B cell (primary cell): ENCODE measurements at regions of chr3 and their contacts with region 1.

Region 1: DNA sequence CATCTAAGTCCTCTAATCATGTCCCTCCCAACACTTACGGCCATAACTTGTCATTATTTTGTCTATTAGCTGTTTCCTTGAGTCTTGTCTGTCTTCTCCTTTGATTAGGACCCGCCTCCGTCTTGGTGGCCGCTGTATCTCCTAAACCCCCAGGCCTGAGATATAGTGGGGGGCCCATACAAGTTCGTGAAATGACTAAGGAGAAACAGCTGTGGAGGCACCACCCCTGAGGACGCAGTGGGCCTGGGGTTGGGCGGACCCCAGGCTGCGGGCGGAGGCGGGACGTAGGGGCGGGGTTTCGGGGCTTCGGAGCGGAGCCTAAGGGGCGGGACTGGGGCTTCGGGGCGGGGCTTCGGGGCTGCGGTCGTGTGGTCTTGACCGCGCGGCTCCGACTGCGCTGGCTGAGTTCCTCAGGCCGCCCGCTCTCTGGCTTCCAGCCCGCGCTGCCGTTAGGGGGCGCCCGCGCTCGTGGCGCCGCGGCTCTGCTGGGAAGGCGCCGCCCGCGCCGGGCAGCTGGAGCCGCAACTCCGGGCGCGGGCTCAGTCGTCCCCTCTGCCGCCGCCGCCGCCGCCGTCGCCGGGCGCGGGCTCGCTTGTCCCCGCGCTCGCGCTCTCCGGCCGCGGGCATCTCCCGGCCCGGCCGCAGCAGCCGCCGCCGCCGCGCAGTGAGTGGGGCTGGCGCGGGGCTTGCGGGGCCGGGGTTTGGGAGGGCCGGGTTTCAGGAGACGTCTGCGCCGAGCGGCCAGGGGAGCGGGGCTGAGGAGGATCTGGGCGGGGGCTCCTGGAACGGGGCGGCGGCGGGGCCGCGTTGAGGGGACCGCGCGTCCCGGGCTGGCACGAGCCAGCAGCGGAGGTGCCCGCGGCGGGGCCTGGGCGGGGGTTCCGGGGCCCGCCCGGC is at the start of gene KCTD6:
- DNase-seq: peak; percentile 96
- ATAC-seq: peak; percentile 91
- H3K4me3 ChIP-seq: peak within 1 kb of the TSS; percentile 50 to 82 (median 75)
- H3K4me3 Mint-ChIP-seq: peak within 1 kb of the TSS; percentile 93
- H3K27ac ChIP-seq: peak within 1 kb of the TSS; percentile 42 to 50
- H3K27ac Mint-ChIP-seq: peak within 1 kb of the TSS; percentile 87
- H3K4me1 ChIP-seq: peaks cover 21 to 29% of the 10 kb centered on the region in 2 donors
- H3K4me1 Mint-ChIP-seq: peaks cover 46% of the 10 kb centered on the region
- H3K27me3 ChIP-seq: no peaks in the 10 kb centered on the region
- H3K27me3 Mint-ChIP-seq: peaks cover 5% of the 10 kb centered on the region
- CTCF ChIP-seq: peak; percentile 59
- total RNA-seq, gene KCTD6: 14.6 and 16.8 TPM in 2 replicates

Region 2: GRCh38 chr3:58237238-58237940 is 254.4 kb before region 1 on chr3 and contains the start of gene ABHD6:
- CTCF ChIA-PET with region 1: no interaction called
- POLR2A ChIA-PET with region 1: no interaction called
- intact Hi-C with region 1: loop called (anchors 5 kb)
- DNase-seq: peak; percentile 93
- ATAC-seq: peak; percentile 75
- H3K4me3 ChIP-seq: peak within 1 kb of the TSS; percentile 51 to 96 (median 93)
- H3K4me3 Mint-ChIP-seq: peak within 1 kb of the TSS; percentile 97
- H3K27ac ChIP-seq: peak within 1 kb of the TSS; percentile 63 to 86
- H3K27ac Mint-ChIP-seq: peak within 1 kb of the TSS; percentile 94
- H3K4me1 ChIP-seq: peaks cover 41 to 48% of the 10 kb centered on the region in 2 donors
- H3K4me1 Mint-ChIP-seq: peaks cover 70% of the 10 kb centered on the region
- H3K27me3 ChIP-seq: no peaks in the 10 kb centered on the region
- H3K27me3 Mint-ChIP-seq: no peaks in the 10 kb centered on the region
- CTCF ChIP-seq: peak; percentile 15
- total RNA-seq, gene ABHD6: 22.2 and 24.2 TPM in 2 replicates

Region 3: DNA sequence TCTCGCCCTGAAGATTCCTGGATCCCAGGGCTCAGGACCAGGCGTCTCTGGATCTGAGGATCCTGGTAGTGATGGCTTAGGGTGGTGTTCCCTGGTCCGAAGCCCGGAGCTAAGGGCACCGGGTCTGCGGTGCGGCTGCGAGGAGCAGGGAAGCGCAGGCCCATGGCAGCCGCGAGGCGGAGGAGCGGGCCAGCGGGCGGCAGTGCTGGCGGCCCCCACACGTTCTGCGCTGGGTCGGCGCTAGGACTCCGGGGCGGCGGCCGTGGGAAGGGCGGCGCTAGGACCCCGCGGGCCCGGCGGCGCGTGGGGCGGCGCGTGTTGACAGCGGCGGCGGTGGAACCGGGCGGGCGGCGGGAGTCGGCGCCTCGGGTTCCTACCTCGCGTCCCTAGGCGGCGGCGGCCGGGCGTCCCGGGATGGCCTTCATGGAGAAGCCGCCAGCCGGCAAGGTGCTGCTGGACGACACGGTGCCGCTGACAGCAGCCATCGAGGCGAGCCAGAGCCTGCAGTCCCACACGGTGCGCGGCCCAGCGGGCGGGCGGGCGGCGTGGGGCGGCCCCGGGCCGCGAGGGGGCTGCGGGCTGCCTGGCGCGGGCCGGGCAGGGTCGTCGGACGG is 159.1 kb before region 1 on chr3 and contains the start of gene PXK:
- CTCF ChIA-PET with region 1: interaction called, 46 read pairs
- POLR2A ChIA-PET with region 1: interaction called, 7 read pairs
- intact Hi-C with region 1: loop called (anchors 1 kb)
- DNase-seq: peak; percentile 86
- ATAC-seq: peak; percentile 76
- H3K4me3 ChIP-seq: peak within 1 kb of the TSS; percentile 72 to 90 (median 87)
- H3K4me3 Mint-ChIP-seq: peak within 1 kb of the TSS; percentile 100
- H3K27ac ChIP-seq: peak within 1 kb of the TSS; percentile 9 to 75
- H3K27ac Mint-ChIP-seq: peak within 1 kb of the TSS; percentile 100
- H3K4me1 ChIP-seq: peaks cover 34 to 41% of the 10 kb centered on the region in 2 donors
- H3K4me1 Mint-ChIP-seq: peaks cover 50% of the 10 kb centered on the region
- H3K27me3 ChIP-seq: no peaks in the 10 kb centered on the region
- H3K27me3 Mint-ChIP-seq: no peaks in the 10 kb centered on the region
- CTCF ChIP-seq: no peak
- total RNA-seq, gene PXK: 104 and 109 TPM in 2 replicates

Region 4: DNA sequence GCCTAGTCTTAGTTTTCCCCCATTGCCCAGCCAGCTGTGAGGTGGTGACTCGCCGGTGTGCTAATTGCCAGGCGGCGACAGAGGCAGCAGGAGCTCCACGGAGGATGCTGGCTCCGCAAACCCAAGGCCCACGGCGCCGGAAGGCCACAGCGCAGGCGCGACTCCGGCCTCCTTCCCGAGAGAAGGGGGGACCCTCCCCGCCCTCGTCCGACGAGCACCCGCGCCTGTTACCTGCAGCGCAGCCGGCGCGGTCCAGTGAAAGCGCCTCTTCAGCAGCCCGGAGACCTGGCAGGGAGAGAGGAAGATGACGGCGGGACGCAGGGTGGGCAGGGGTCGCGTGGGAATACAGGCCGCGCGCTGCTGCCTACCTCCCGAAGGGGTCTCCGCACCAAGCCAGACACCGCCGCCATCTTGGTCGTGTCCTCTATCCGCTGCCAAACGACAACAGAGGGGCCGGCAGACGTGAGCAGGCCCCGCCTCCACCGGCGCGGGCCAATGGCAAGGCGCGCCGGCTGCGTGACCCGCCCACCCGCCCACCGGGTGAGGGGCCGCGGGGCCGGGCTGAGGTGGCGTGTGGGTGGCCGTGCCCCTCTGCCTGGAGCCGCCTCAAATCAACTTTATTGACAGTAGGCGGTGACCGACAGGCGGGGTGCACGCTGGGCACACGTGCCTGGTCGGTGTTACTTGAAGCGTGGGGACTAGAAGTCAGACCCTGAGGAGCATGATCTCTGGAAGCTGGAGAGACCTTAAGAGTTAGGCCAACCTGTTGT is 58.2 kb before region 1 on chr3 and contains the start of gene PDHB:
- CTCF ChIA-PET with region 1: interaction called, 3 read pairs
- POLR2A ChIA-PET with region 1: interaction called, 5 read pairs
- intact Hi-C with region 1: loop called (anchors 1 kb)
- DNase-seq: peak; percentile 93
- ATAC-seq: peak; percentile 94
- H3K4me3 ChIP-seq: peak within 1 kb of the TSS; percentile 75 to 93 (median 91)
- H3K4me3 Mint-ChIP-seq: peak within 1 kb of the TSS; percentile 97
- H3K27ac ChIP-seq: peak within 1 kb of the TSS; percentile 82 to 87
- H3K27ac Mint-ChIP-seq: peak within 1 kb of the TSS; percentile 98
- H3K4me1 ChIP-seq: peaks cover 9 to 22% of the 10 kb centered on the region in 2 donors
- H3K4me1 Mint-ChIP-seq: peaks cover 25% of the 10 kb centered on the region
- H3K27me3 ChIP-seq: no peaks in the 10 kb centered on the region
- H3K27me3 Mint-ChIP-seq: no peaks in the 10 kb centered on the region
- CTCF ChIP-seq: no peak
- total RNA-seq, gene PDHB: 59.0 and 67.2 TPM in 2 replicates

Region 5: GRCh38 chr3:58474348-58474911 is 17.3 kb before region 1 on chr3:
- CTCF ChIA-PET with region 1: interaction called, 7 read pairs
- POLR2A ChIA-PET with region 1: no interaction called
- intact Hi-C with region 1: loop called (anchors 2 kb)
- DNase-seq: peak; percentile 46
- ATAC-seq: peak; percentile 26
- H3K4me3 ChIP-seq: no peak overlapping the region
- H3K4me3 Mint-ChIP-seq: peak overlapping the region; percentile 76
- H3K27ac ChIP-seq: peak overlapping the region; percentile 1 to 40
- H3K27ac Mint-ChIP-seq: peak overlapping the region; percentile 75
- H3K4me1 ChIP-seq: peaks cover 20 to 26% of the 10 kb centered on the region in 2 donors
- H3K4me1 Mint-ChIP-seq: peaks cover 27% of the 10 kb centered on the region
- H3K27me3 ChIP-seq: no peaks in the 10 kb centered on the region
- H3K27me3 Mint-ChIP-seq: no peaks in the 10 kb centered on the region
- CTCF ChIP-seq: no peak

Region 6: DNA sequence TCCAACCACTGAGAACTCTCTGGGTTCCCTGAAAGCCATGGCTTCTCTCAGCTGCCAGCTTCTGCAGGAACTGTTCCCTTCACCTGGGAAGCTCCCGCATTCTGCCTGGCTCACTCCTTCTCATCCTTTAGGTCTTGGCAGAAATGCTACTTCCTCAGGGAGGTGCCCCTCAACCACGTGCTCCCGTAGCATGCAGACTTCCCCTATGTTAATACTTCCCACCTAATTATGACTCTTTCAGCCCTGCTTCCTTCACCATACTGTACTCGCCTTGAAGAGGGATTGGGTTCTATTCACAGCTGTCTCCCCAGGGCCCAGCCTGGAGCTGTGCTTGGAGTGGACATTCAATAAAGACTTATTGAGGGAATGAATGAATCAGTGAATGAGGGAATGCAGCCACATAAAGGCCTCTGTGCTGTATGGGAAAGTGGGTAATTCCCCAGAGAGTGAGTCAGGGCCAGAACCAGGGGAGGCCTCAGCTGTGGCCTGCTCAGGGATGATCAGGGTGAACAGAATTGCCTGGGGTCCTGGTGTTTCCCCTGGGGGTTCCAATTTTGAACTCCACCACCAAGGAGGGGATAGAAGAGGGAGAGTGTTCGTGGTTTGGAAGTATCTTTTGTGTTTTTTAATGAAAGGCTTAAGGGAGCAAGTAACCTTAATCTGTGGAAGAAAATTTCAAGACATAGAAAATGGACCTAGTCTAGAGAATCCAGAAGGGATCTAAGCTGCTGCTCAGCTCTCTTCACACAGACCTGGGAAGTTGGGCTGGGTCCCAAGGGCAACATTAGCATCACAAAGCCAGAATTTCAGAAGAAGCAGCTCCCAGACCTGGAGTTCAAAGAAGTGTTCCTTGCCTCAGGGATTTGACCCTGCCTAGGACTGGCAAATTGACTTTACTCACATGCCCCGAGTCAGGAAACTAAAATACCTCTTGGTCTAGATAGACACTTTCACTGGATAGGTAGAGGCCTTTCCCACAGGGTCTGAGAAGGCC is 100.1 kb after region 1 on chr3:
- CTCF ChIA-PET with region 1: no interaction called
- POLR2A ChIA-PET with region 1: no interaction called
- intact Hi-C with region 1: no loop called
- DNase-seq: no peak
- ATAC-seq: no peak
- H3K4me3 ChIP-seq: no peak overlapping the region
- H3K4me3 Mint-ChIP-seq: no peak overlapping the region
- H3K27ac ChIP-seq: no peak overlapping the region
- H3K27ac Mint-ChIP-seq: no peak overlapping the region
- H3K4me1 ChIP-seq: peaks cover 0 to 5% of the 10 kb centered on the region in 2 donors
- H3K4me1 Mint-ChIP-seq: peaks cover 2% of the 10 kb centered on the region
- H3K27me3 ChIP-seq: peaks cover 0 to 19% (median 6%) of the 10 kb centered on the region in 4 experiments
- H3K27me3 Mint-ChIP-seq: peaks cover 20% of the 10 kb centered on the region
- CTCF ChIP-seq: no peak